AG04450 (cell line): ENCODE measurements at regions of chr12 and their contacts with region 1.

Region 1: DNA sequence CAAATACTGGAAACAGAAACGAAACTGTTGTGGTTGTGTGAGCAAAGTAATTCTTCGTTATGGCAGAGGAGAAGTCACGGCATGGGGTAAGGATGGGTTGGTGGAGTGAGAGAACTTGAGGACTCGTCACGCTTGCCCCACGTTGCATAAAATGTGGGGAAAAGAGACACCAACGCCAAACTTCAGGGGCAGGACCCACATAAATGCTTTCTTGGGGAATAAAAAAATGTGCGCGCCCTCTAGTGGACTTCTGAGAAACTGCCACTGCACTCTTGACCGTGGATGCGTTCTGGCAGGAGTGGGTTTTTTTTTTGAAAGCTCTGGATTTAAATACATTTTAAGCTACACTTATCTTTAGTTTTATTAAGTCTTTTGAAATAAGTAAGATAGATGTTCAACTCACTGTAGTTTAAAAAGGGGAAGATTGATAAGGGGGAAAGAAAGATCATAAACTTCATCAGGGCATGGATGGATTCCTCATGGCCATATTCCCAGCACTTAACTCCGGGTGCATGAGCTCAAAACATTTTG is 4.1 kb upstream of the IGF1 start:
- DNase-seq: no peak
- H3K4me3 ChIP-seq: no peak overlapping the region
- H3K27ac ChIP-seq: no peak overlapping the region
- H3K27me3 ChIP-seq: no peaks in the 10 kb centered on the region
- CTCF ChIP-seq: peak; percentile 93

Region 2: GRCh38 chr12:101919447-101919846 is 565.0 kb before region 1 on chr12:
- CTCF ChIA-PET with region 1: interaction called, 13 read pairs
- POLR2A ChIA-PET with region 1: no interaction called
- DNase-seq: no peak
- H3K4me3 ChIP-seq: no peak overlapping the region
- H3K27ac ChIP-seq: no peak overlapping the region
- H3K27me3 ChIP-seq: no peaks in the 10 kb centered on the region
- CTCF ChIP-seq: no peak

Region 3: DNA sequence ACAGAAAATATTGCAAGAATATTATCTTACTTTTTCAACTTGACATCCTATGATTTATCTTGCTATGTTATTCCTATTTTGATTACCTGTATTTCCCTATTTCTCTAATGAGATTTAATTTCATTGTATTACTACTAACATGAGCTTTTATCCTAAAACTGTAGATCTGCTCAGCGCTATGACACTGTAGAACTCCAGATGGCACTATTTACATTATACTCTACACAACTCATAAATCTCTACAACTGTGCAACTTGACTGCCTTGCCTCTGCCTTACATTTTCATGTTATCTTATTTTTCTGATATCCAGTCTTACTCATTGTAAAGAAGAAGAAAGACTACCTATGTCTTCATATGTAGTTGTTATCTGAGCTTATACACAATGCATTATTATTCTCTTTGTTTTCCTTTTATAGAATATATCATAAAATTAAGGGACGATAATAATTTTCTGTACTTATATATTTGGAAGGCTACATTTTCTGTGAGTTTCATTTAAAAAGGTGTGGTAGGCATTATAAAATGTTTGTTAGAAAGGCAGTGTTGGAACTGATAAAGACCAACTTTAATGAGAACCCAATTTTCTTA is 388.7 kb before region 1 on chr12:
- CTCF ChIA-PET with region 1: interaction called, 80 read pairs
- POLR2A ChIA-PET with region 1: no interaction called
- DNase-seq: no peak
- H3K4me3 ChIP-seq: no peak overlapping the region
- H3K27ac ChIP-seq: no peak overlapping the region
- H3K27me3 ChIP-seq: no peaks in the 10 kb centered on the region
- CTCF ChIP-seq: peak; percentile 39

Region 4: GRCh38 chr12:102462795-102463465 is 21.6 kb before region 1 on chr12:
- CTCF ChIA-PET with region 1: interaction called, 66 read pairs
- POLR2A ChIA-PET with region 1: no interaction called
- DNase-seq: no peak
- H3K4me3 ChIP-seq: no peak overlapping the region
- H3K27ac ChIP-seq: no peak overlapping the region
- H3K27me3 ChIP-seq: no peaks in the 10 kb centered on the region
- CTCF ChIP-seq: no peak

Region 5: DNA sequence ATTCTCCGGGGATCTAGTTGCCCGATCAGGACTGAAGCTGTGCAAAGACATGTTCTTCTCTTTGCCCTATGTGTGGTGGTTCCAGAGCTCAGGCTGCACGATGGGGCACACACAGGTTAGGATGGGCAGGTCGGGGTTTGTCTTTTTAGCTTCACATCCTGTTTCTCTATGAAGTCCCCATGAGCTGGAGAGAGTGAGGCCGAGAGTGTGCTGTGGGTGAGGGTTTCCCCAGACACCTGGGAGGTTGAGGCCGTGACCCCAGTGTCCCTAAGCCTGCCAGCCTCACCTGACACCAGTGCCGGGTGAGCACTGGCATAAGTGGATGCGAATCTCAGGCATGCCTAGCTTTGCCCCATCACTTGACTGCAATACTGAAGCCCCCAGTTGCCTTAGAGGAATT is 28.8 kb after region 1 on chr12:
- CTCF ChIA-PET with region 1: interaction called, 12 read pairs
- POLR2A ChIA-PET with region 1: no interaction called
- DNase-seq: no peak
- H3K4me3 ChIP-seq: no peak overlapping the region
- H3K27ac ChIP-seq: no peak overlapping the region
- H3K27me3 ChIP-seq: no peaks in the 10 kb centered on the region
- CTCF ChIP-seq: no peak

Region 6: DNA sequence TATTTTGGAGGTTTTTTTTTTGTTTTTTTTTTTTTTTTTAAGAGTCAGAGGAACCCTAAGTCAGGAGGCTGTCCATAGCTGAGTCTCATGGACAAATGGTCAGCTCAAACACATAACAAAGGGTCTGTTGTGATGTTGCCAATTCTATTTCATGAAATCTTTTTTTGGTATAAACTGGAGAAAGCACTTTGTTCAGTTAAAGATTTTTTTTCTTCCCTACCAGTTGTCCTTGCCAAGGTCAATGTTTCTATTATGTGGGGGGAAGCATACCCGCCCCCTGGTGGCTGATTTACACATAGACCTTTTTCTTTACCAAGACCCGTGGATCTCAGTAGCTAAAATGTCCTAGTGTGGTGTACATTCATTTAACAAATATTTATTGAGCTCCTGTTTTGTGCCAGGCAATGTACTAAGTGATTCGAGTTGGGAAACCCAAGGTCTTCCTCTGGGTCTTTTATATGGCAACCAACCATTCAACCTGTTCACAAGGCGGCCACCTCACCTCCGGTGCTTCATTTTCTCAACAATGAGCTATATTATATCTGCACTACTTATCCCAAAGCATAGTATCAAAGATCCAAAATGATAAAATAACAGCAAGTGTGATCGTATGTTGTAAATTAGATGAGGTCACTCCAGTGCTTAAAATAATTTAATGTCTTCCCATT is 218.1 kb after region 1 on chr12:
- CTCF ChIA-PET with region 1: interaction called, 21 read pairs
- POLR2A ChIA-PET with region 1: no interaction called
- DNase-seq: peak; percentile 27
- H3K4me3 ChIP-seq: no peak overlapping the region
- H3K27ac ChIP-seq: no peak overlapping the region
- H3K27me3 ChIP-seq: no peaks in the 10 kb centered on the region
- CTCF ChIP-seq: peak; percentile 69